ENCODE measurements at regions of chr1 and their contacts with region 1.

Region 1: DNA sequence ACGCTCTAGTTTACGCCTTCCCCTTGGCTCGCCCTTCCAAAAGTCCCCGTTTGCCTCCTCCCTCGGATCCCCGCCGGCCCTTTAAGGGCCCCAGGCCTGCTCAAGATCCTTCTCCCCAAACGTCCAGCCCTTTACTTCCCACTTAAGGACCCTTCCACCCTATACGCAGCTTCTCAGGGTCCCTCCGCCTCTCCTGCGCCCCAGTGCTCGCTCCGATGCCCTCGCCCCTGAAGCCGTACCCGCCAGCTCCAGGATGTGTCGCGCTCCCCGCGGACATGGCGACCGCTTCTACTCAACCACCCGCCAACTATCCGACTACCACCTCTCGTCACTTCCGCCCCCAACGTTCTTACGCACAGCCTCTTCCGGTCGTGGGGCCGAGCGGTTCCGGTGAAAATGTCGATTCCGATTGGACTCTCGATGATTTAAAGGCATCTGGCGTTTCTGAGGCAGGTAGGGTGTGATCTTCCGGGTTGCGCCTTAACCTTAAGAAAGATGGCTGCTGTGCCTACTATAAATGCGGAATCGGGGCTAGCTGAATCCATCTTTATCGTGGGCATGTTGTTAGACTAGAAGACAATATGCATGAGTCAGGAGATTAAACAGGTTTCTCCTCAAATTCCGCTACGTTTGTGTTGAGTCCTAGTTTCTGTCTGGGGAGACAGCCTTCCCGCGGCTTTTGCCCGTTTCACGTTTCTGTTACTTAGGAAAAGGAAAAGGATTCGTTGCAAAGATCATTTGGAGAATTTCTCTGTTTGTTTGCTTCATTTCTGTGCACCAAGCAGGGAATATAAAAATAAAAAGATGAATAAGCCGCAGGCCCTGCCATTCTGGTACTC is at the start of gene KHDC4:
- DNase-seq: peak; percentile 97
- ATAC-seq: peak; percentile 97
- H3K4me3 Mint-ChIP-seq: no peak within 1 kb of the TSS
- H3K27ac Mint-ChIP-seq: no peak within 1 kb of the TSS
- H3K4me1 Mint-ChIP-seq: peaks cover 46% of the 10 kb centered on the region
- H3K27me3 Mint-ChIP-seq: no peaks in the 10 kb centered on the region
- total RNA-seq, gene KHDC4: 68.7 to 97.5 TPM

Region 2: DNA sequence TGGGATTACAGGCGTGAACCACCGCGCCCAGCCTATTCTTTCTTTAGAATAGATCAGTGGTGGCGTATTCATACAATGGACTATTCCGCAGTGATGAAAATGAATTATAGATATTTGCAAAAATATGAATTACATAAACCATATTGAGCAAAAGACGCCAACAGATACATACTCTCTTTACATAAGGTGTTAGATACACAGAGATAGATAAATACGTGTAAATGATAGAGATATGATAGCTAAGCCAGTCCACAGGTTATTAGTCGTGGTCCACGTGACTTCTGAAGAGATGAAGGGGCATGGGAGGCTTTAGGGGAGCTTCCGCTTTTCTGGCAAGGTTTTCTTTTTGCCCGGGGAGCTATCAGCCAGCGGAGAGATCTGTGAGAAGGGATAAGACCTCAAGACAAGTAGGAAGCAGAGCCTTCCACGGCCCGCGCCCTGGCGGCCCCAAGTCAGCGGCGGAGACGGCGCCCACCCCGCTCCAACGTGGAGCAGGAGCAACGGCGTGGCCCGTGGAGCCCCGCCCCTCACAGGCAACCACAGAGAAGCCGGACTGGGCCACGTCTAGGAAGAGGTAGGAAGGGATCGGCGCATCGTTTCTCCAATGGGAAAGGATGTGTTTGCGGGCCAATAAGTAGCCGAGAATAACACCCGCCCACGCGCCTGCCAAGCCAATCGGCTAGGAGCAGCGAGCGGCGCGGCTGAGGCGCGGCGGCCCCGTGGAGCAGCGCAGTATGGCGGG is 324.6 kb before region 1 on chr1 and contains the start of gene MSTO1:
- CTCF ChIA-PET with region 1: no interaction called
- POLR2A ChIA-PET with region 1: no interaction called
- intact Hi-C with region 1: no loop called
- DNase-seq: peak; percentile 100
- ATAC-seq: peak; percentile 97
- H3K4me3 Mint-ChIP-seq: peak within 1 kb of the TSS; percentile 95
- H3K27ac Mint-ChIP-seq: peak within 1 kb of the TSS; percentile 92
- H3K4me1 Mint-ChIP-seq: peaks cover 3% of the 10 kb centered on the region
- H3K27me3 Mint-ChIP-seq: no peaks in the 10 kb centered on the region
- total RNA-seq, gene MSTO1: 56.8 to 62.1 TPM

Region 3: DNA sequence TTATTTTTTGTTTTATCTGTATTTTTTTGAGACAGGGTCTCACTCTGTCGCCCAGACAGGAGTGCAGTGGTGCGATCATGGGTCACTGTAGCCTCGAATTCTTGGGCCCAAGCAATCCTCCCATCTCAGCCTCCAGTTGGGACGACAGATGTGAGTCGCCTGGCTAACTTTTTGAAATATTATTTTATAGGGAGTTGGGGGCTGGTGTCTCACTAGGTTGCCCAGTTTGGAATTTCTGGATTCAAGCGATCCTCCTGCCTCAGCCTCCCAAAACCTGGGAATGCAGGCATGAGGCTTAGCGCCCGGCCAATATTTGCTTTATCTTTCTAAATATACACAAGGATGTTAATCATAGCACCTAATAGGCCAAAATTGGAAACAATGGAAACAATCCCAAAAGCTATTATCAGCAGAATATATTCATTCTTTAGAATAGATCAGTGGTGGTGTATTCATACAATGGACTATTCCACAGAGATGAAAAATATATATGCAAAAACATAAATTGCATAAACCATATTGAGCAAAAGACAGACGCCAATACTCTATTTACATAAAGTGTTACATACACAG is 189.5 kb before region 1 on chr1:
- CTCF ChIA-PET with region 1: no interaction called
- POLR2A ChIA-PET with region 1: no interaction called
- intact Hi-C with region 1: loop called in 1 of 2 experiments (anchors 1 kb)
- DNase-seq: no peak
- ATAC-seq: no peak
- H3K4me3 Mint-ChIP-seq: peak overlapping the region; percentile 90
- H3K27ac Mint-ChIP-seq: peak overlapping the region; percentile 78
- H3K4me1 Mint-ChIP-seq: peaks cover 4% of the 10 kb centered on the region
- H3K27me3 Mint-ChIP-seq: no peaks in the 10 kb centered on the region

Region 4: DNA sequence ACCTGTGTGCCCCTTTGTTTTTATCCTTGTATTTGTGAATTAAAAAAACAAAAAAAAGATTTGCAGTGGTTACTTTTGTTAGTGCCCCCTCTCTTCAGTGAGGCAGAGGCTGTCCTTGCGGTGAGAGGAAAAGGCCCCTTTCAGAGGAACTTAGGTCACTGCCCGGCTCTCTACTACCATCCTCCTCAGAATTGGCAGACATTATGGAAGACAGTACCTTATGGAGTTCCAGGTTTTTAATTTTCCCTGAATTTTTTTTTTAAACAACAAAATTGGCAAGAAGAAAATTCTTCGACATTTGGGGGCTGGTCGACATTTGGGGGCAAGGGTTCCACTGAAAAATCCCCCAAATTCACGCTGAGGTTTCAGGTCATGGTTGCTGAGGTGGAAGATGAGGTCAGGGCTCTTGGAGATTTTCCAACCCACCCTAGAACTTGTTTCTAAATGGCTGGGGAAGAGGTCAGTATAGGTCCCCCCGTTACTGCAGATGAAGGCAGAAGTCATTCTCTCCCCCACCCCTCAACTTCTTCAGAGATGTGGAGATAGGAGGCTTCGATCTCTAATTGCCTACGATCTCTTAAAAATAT is 12.4 kb after region 1 on chr1:
- CTCF ChIA-PET with region 1: interaction called, 18 read pairs
- POLR2A ChIA-PET with region 1: interaction called, 20 read pairs
- intact Hi-C with region 1: loop called (anchors 1 kb)
- DNase-seq: no peak
- ATAC-seq: peak; percentile 13
- H3K4me3 Mint-ChIP-seq: peak overlapping the region; percentile 58
- H3K27ac Mint-ChIP-seq: peak overlapping the region; percentile 96
- H3K4me1 Mint-ChIP-seq: peaks cover 50% of the 10 kb centered on the region
- H3K27me3 Mint-ChIP-seq: no peaks in the 10 kb centered on the region

Region 5: DNA sequence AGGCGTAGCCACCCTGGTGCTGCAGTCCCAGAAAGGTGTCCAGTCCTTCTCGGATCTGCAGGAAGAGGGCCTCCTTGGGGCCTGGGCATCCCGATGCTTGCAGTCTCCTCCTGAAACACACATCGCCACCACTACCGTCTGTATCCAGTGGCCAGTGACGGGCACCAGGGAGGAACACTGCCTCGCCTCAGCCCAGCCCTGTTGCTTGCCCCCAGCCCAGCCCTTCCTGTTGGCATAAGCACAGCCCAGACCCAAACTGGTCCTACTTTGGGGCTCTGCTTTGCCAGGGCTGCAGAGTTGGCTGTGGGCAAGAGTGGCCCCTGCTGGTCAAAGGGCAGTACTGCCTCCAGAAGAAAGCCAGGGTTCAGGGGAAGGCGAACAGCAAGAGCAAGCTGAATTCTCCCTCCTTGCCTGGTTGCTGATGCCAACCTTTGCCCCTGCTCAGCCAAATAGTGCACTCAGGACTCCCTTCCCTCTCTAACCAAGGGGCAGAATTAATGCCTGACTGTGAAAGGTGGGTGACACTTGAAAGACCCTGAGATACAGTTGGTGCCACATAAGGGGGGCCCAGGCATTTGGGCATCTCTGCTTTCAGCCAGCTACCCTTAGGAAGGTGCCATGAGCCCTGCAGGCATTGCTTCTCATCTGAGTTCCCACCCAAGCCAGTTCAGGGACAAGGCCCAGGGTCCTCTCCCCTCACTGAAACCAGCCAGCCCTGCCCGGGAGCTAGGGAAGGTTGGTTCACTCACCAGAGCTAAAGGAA is 55.1 kb after region 1 on chr1:
- CTCF ChIA-PET with region 1: interaction called, 72 read pairs
- POLR2A ChIA-PET with region 1: interaction called, 8 read pairs
- intact Hi-C with region 1: loop called (anchors 1 kb)
- DNase-seq: peak; percentile 88
- ATAC-seq: peak; percentile 96
- H3K4me3 Mint-ChIP-seq: no peak overlapping the region
- H3K27ac Mint-ChIP-seq: no peak overlapping the region
- H3K4me1 Mint-ChIP-seq: peaks cover 16% of the 10 kb centered on the region
- H3K27me3 Mint-ChIP-seq: no peaks in the 10 kb centered on the region

Region 6: DNA sequence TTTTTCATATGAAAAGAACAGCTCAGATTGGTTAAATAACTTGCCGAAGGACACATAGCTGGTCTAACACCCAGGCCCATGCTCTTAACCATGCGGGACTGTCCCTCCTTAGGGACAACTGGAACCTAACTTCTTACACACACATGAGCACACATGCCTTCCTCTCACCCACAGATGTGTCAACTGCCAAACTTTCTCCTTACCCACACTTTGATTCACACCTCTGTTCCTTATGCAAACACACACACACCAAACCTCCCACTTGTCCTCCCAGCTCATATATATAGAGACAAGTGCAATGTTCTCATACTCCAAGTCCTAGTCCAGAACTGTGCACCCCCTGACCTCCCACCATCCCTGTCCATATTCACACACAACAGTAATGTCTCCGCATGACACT is 130.9 kb after region 1 on chr1:
- CTCF ChIA-PET with region 1: interaction called, 9 read pairs
- POLR2A ChIA-PET with region 1: interaction called, 5 read pairs
- intact Hi-C with region 1: loop called in 1 of 2 experiments (anchors 1 kb)
- DNase-seq: peak; percentile 21
- ATAC-seq: peak; percentile 29
- H3K4me3 Mint-ChIP-seq: no peak overlapping the region
- H3K27ac Mint-ChIP-seq: no peak overlapping the region
- H3K4me1 Mint-ChIP-seq: peaks cover 14% of the 10 kb centered on the region
- H3K27me3 Mint-ChIP-seq: no peaks in the 10 kb centered on the region

Measured in activated CD4-positive, alpha-beta T cell treated with anti-CD3 and anti-CD28 coated beads for 36 hours (primary cell).